Activated CD8-positive, alpha-beta memory T cell treated with anti-CD3 and anti-CD28 coated beads, Interleukin-2, amount 10 ng/mL, durations not matched to agents 7 days and 5 days (primary cell): ENCODE measurements at regions of chr5 and their contacts with region 1.

Region 1: GRCh38 chr5:36414869-36415282 is 113.2 kb upstream of the RANBP3L start:
- DNase-seq: no peak
- ATAC-seq: no peak
- H3K4me3 Mint-ChIP-seq: no peak overlapping the region
- H3K27ac Mint-ChIP-seq: no peak overlapping the region
- H3K4me1 Mint-ChIP-seq: peaks cover 8% of the 10 kb centered on the region
- H3K27me3 Mint-ChIP-seq: peaks cover 12% of the 10 kb centered on the region

Region 2: GRCh38 chr5:36507332-36507952 is 92.6 kb after region 1 on chr5:
- CTCF ChIA-PET with region 1: interaction called, 14 read pairs
- DNase-seq: peak; percentile 75
- ATAC-seq: no peak
- H3K4me3 Mint-ChIP-seq: no peak overlapping the region
- H3K27ac Mint-ChIP-seq: no peak overlapping the region
- H3K4me1 Mint-ChIP-seq: no peaks in the 10 kb centered on the region
- H3K27me3 Mint-ChIP-seq: peaks cover 30% of the 10 kb centered on the region

Region 3: GRCh38 chr5:36606428-36607113 is 191.7 kb after region 1 on chr5 and contains the start of gene SLC1A3:
- CTCF ChIA-PET with region 1: no interaction called
- DNase-seq: peak; percentile 73
- ATAC-seq: peak; percentile 89
- H3K4me3 Mint-ChIP-seq: peak within 1 kb of the TSS; percentile 74
- H3K27ac Mint-ChIP-seq: no peak within 1 kb of the TSS
- H3K4me1 Mint-ChIP-seq: peaks cover 20% of the 10 kb centered on the region
- H3K27me3 Mint-ChIP-seq: peaks cover 74% of the 10 kb centered on the region
- total RNA-seq, gene SLC1A3: not detected